H1 (cell line): ENCODE measurements at regions of chr22 and their contacts with region 1.

Region 1: DNA sequence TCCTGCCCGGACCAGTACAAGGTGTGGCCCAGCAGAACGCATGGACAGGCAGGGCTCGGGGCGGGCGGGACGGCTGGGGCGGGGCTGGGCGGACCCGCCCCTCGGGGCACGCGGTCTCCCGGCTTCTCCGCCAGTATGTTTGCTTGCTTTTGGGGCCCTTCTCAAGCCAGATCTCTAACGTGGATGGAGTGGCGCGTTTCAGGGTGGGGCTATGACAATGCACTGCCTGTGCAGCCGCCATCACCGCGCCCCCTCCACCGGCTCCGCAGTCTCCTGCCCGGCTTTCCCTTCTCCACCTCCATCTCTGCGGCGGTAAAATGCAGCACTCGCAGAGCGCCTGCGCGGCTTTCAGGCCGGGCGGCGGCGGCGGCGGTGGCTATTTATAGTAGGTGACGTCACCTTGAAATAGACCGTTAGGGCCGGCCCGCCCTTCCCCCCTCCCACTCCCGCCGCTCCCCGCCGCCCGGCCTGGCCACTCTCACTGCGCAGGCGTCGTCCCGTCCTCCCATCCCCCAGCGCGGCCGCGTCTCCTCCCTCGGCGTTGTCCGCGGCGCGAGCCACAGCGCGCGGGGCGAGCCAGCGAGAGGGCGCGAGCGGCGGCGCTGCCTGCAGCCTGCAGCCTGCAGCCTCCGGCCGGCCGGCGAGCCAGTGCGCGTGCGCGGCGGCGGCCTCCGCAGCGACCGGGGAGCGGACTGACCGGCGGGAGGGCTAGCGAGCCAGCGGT is at the start of gene YWHAH:
- DNase-seq: peak; percentile 84 to 95
- H3K4me3 ChIP-seq: peak within 1 kb of the TSS; percentile 80 to 92 (median 85)
- H3K27ac ChIP-seq: peak within 1 kb of the TSS; percentile 91
- H3K4me1 ChIP-seq: peaks cover 2 to 14% (median 11%) of the 10 kb centered on the region in 4 experiments; a peak in 6 of 7 replicates
- H3K27me3 ChIP-seq: no peaks in the 10 kb centered on the region
- CTCF ChIP-seq: no peak
- EP300 ChIP-seq: no peak
- POLR2A ChIP-seq: peak; percentile 59 to 97
- RAD21 ChIP-seq: peak in 1 of 2 experiments; percentile 7; a peak in 1 of 4 replicates
- total RNA-seq, gene YWHAH: 247 and 248 TPM in 2 replicates

Region 2: DNA sequence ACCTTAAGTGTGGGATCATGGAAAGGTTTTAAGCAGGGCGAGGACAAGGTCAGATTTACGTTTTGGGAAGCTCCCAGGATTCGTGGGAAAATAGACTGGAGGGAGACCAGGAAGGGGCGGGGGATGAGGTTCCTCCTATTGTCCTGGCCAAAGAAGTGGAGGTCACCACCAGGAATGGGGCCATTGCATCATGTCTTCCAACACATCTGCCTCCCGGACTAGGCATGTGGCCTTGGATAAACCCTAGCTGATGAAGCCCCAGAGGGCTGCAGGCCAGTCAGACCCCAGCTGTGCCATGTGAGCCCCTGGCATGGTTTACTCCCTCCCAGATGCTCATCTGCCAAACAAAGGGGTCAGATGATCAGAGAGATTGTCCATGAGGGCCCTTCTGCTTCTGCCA is 11.3 kb before region 1 on chr22:
- CTCF ChIA-PET with region 1: no interaction called
- POLR2A ChIA-PET with region 1: interaction called, 12 read pairs
- DNase-seq: no peak
- H3K4me3 ChIP-seq: no peak overlapping the region
- H3K27ac ChIP-seq: no peak overlapping the region
- H3K4me1 ChIP-seq: no peaks in the 10 kb centered on the region
- H3K27me3 ChIP-seq: no peaks in the 10 kb centered on the region
- CTCF ChIP-seq: no peak
- EP300 ChIP-seq: no peak
- POLR2A ChIP-seq: no peak
- RAD21 ChIP-seq: no peak

Region 3: GRCh38 chr22:31954535-31955523 is 10.7 kb after region 1 on chr22:
- CTCF ChIA-PET with region 1: interaction called, 18 read pairs
- POLR2A ChIA-PET with region 1: interaction called, 39 read pairs
- DNase-seq: no peak
- H3K4me3 ChIP-seq: no peak overlapping the region
- H3K27ac ChIP-seq: no peak overlapping the region
- H3K4me1 ChIP-seq: peaks cover 2 to 12% (median 7%) of the 10 kb centered on the region in 4 experiments; a peak in 6 of 7 replicates
- H3K27me3 ChIP-seq: no peaks in the 10 kb centered on the region
- CTCF ChIP-seq: no peak
- EP300 ChIP-seq: no peak
- POLR2A ChIP-seq: no peak
- RAD21 ChIP-seq: no peak

Region 4: GRCh38 chr22:32144496-32145274 is 200.5 kb after region 1 on chr22:
- CTCF ChIA-PET with region 1: no interaction called
- POLR2A ChIA-PET with region 1: no interaction called
- DNase-seq: peak in 1 of 2 experiments; percentile 23
- H3K4me3 ChIP-seq: no peak overlapping the region
- H3K27ac ChIP-seq: no peak overlapping the region
- H3K4me1 ChIP-seq: no peaks in the 10 kb centered on the region
- H3K27me3 ChIP-seq: no peaks in the 10 kb centered on the region
- CTCF ChIP-seq: no peak
- EP300 ChIP-seq: no peak
- POLR2A ChIP-seq: no peak
- RAD21 ChIP-seq: no peak